Activated naive CD8-positive, alpha-beta T cell treated with anti-CD3 and anti-CD28 coated beads, Interleukin-2, amount 10 ng/mL, durations not matched to agents 7 days and 5 days (primary cell): ENCODE measurements at regions of chrX and their contacts with region 1.

Region 1: DNA sequence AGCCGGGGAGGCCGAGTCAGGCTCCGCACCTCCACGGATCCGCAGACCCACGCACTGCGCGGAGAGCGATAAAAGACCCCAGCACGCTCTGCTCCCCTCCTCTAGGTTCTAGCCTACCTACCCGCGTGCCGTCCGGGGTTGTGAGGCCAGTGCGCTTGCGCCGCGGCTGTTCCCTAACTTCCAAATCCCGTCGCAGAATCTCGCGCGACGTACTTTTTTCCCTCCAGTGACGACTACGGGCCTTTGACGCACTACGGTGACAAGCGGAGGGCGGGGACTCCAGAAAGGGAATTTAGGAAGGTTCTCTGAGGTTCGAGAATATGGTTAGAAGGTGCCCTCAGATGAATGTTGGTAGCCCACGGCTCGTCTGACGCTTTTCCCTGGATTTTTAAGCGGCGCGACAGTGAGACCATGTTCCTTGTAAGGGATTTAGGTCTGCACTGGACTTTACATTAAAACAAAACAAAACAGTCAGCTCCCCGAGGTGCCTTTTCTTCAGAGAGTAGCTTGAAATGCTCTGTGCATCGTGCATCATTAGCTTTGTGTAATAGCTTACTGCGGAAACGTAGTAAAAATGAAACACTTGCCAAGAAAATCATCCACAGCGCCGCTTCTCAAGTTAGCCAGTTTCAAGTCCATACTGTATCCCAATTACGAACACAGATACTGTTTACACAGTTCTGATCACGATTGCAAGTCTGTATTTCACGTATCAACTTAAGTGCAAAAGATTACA is at the start of gene NKRF:
- DNase-seq: peak; percentile 88
- ATAC-seq: peak; percentile 77
- H3K4me3 Mint-ChIP-seq: peak within 1 kb of the TSS; percentile 99
- H3K27ac Mint-ChIP-seq: peak within 1 kb of the TSS; percentile 95
- H3K4me1 Mint-ChIP-seq: peaks cover 21% of the 10 kb centered on the region
- H3K27me3 Mint-ChIP-seq: peaks cover 2% of the 10 kb centered on the region
- total RNA-seq, gene NKRF: 14.3 to 14.4 TPM

Region 2: GRCh38 chrX:119574394-119575266 is 31.8 kb before region 1 on chrX and contains the start of gene UBE2A:
- POLR2A ChIA-PET with region 1: interaction called, 19 read pairs
- DNase-seq: peak; percentile 88
- ATAC-seq: peak; percentile 90
- H3K4me3 Mint-ChIP-seq: peak within 1 kb of the TSS; percentile 92
- H3K27ac Mint-ChIP-seq: peak within 1 kb of the TSS; percentile 88
- H3K4me1 Mint-ChIP-seq: peaks cover 11% of the 10 kb centered on the region
- H3K27me3 Mint-ChIP-seq: no peaks in the 10 kb centered on the region
- total RNA-seq, gene UBE2A: 72.5 to 73.5 TPM

Region 3: GRCh38 chrX:119589810-119590209 is 16.6 kb before region 1 on chrX:
- POLR2A ChIA-PET with region 1: no interaction called
- DNase-seq: no peak
- ATAC-seq: no peak
- H3K4me3 Mint-ChIP-seq: no peak overlapping the region
- H3K27ac Mint-ChIP-seq: no peak overlapping the region
- H3K4me1 Mint-ChIP-seq: peaks cover 4% of the 10 kb centered on the region
- H3K27me3 Mint-ChIP-seq: no peaks in the 10 kb centered on the region

Region 4: DNA sequence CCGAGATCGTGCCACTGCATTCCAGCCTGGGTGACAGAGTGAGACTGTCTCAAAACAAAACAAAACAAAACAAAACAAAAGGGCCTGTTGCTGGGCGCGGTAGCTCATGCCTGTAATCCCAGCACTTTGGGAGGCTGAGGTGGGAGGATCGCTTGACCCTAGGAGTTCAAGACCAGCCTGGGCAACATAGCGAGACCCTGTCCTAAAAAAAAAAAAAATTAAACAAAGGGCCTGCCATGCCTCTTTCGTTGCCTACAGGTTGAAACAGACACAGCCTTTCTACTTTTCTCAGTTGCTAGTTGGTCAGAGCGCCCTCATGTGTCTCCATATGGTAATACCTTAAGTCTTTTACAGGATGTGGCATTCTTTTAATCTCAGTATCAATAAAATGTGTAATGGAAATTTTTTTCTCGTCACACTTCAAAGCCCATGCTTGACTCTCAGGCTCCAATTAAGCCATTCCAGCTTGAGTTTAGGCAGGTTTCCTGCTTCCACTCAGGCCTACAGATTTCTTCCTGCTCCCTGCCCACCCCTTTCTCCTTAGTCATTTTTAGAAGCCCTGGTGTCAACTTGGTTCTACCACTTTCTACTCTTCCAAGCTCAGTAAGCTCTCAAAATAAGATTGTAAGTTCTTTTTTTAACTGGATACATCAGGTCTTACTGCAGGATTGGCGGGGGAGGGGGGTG is 147.3 kb after region 1 on chrX:
- POLR2A ChIA-PET with region 1: interaction called, 12 read pairs
- DNase-seq: no peak
- ATAC-seq: peak; percentile 28
- H3K4me3 Mint-ChIP-seq: peak overlapping the region; percentile 40
- H3K27ac Mint-ChIP-seq: peak overlapping the region; percentile 91
- H3K4me1 Mint-ChIP-seq: peaks cover 38% of the 10 kb centered on the region
- H3K27me3 Mint-ChIP-seq: no peaks in the 10 kb centered on the region